MCF 10A (cell line): ENCODE measurements at regions of chr20 and their contacts with region 1.

Region 1: DNA sequence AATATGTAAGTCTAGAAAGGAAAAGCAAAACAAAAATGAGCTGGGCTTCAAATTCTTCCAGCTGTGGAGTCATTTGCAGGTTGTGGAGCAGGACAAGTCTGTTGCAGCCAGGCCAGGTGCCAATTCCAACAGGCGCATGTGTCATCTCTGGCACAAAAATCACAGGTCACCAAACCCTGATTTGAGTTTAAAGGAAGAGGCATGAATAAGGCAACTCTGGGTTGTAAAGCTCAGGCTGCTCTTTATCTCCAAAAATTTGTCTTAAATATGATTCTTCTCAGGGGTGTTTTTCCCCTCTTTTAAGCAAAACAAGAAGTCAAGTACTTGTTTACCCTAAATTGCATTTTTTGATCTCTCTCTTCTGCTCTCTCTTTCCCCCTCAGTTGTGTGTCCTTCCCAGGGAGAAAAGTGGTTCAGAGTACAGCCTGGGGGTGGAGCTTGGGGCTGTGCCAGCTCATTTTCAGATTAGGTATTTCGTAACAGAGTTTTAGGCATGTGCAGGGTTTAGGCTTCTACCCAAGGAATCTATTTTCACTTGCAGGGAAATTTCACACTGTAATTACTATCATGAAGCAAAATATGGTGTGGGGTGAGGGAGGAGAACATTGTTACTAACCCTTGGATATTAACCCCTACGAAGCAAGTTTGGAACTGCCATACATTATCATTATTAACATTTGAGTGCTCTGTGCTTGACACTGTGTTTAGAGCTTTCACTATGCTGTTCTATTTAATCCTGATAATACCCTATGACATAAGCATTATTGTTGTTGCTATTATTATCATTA is 8.3 kb upstream of the NCOA3 start:
- DNase-seq: peak; percentile 90
- H3K4me3 Mint-ChIP-seq: peak overlapping the region; percentile 44
- H3K27ac Mint-ChIP-seq: peak overlapping the region; percentile 21
- H3K4me1 Mint-ChIP-seq: peaks cover 13% of the 10 kb centered on the region
- H3K27me3 Mint-ChIP-seq: no peaks in the 10 kb centered on the region
- CTCF ChIP-seq: no peak

Region 2: GRCh38 chr20:47356526-47357295 is 136.7 kb before region 1 on chr20 and contains the start of gene ZMYND8:
- CTCF ChIA-PET with region 1: no interaction called
- POLR2A ChIA-PET with region 1: interaction called, 15 read pairs
- intact Hi-C with region 1: no loop called
- DNase-seq: peak; percentile 94
- H3K4me3 Mint-ChIP-seq: peak within 1 kb of the TSS; percentile 70
- H3K27ac Mint-ChIP-seq: no peak within 1 kb of the TSS
- H3K4me1 Mint-ChIP-seq: peaks cover 72% of the 10 kb centered on the region
- H3K27me3 Mint-ChIP-seq: no peaks in the 10 kb centered on the region
- CTCF ChIP-seq: no peak
- total RNA-seq, gene ZMYND8: 126 and 127 TPM in 2 replicates

Region 3: DNA sequence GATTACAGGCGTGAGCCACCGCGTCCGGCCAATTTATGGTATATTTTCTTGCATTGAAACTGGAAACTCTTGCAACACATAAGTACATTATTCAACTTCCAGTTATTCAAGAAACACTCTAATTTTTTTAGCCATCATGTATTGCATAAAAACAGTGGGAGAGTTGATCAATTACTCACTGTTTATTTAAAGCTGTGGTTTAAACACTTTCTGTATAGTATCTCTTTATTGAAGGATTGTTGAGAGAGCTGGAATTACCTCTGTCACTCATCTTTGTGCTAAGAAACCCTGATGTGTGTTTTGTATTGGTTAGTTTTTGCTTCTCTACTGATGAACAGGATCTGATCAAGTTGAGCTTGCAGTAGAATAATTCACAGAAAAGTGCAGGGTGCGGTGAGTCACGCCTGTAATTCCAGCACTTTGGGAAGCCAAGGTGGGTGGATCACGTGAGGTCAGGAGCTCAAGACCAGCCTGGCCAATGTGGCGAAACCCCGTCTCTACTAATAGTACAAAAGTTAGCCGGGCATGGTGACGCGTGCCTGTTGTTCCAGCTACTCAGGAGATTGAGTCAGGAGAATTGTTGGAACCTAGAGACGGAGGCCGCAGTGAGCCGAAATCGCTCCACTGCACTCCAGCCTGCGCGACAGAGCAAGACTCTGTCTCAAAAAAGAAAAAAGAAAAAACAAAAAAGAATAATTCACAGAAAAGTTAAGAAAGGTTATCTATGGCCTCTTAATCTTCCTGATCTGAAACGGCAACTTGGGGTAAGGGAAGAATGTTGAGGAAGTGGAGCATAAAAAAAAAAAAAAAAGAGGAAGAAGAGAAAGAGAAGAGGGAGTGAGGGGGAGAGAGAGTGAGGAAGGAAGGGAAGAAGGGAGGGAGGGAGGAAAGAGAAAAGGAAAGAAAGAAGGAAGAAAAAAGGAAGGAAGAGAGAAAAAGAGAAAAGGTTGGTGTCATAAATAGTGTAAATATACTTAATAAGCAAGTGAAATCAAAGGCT is 60.9 kb before region 1 on chr20:
- CTCF ChIA-PET with region 1: no interaction called
- POLR2A ChIA-PET with region 1: interaction called, 36 read pairs
- intact Hi-C with region 1: no loop called
- DNase-seq: peak; percentile 94
- H3K4me3 Mint-ChIP-seq: peak overlapping the region; percentile 66
- H3K27ac Mint-ChIP-seq: peak overlapping the region; percentile 99
- H3K4me1 Mint-ChIP-seq: peaks cover 27% of the 10 kb centered on the region
- H3K27me3 Mint-ChIP-seq: no peaks in the 10 kb centered on the region
- CTCF ChIP-seq: no peak

Region 4: GRCh38 chr20:47464380-47465101 is 28.8 kb before region 1 on chr20:
- CTCF ChIA-PET with region 1: interaction called, 9 read pairs
- POLR2A ChIA-PET with region 1: interaction called, 62 read pairs
- intact Hi-C with region 1: no loop called
- DNase-seq: peak; percentile 99
- H3K4me3 Mint-ChIP-seq: peak overlapping the region; percentile 51
- H3K27ac Mint-ChIP-seq: peak overlapping the region; percentile 72
- H3K4me1 Mint-ChIP-seq: peaks cover 38% of the 10 kb centered on the region
- H3K27me3 Mint-ChIP-seq: no peaks in the 10 kb centered on the region
- CTCF ChIP-seq: no peak

Region 5: GRCh38 chr20:47535088-47535487 is 41.7 kb after region 1 on chr20:
- CTCF ChIA-PET with region 1: no interaction called
- POLR2A ChIA-PET with region 1: no interaction called
- intact Hi-C with region 1: no loop called
- DNase-seq: no peak
- H3K4me3 Mint-ChIP-seq: no peak overlapping the region
- H3K27ac Mint-ChIP-seq: no peak overlapping the region
- H3K4me1 Mint-ChIP-seq: peaks cover 9% of the 10 kb centered on the region
- H3K27me3 Mint-ChIP-seq: no peaks in the 10 kb centered on the region
- CTCF ChIP-seq: no peak

Region 6: DNA sequence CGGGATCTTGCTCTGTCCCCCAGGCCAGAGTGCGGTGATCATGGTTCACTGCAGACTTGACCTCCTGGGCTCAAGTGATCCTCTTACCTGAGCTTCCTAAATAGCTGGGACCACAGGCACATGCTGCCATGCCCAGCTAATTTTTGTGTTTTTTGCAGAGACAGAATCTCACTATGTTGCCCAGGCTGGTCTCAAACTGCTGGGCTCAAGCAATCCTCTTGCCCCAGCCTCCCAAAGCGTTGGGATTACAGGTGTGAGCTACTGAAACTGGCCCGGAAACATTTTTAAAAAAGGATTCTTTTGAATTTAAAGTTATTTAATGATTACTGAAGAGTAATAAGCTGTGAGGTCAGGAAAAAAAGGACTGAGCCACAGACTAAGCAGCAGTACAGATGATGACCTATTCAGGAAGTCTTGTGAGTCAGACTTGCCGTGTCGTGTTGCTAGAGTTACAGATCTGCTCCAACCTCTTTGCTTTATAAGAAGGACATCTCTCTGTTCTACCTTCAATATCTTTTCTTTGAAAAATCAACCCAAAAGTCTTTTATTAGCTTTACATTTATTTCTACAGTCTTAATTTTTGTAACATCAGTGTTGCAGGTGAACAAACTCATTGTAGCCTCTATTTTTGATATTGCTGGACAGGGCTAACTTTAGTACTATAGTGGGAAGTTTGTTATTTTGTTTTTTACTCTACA is 117.0 kb after region 1 on chr20:
- CTCF ChIA-PET with region 1: interaction called, 3 read pairs
- POLR2A ChIA-PET with region 1: interaction called, 10 read pairs
- intact Hi-C with region 1: no loop called
- DNase-seq: peak; percentile 66
- H3K4me3 Mint-ChIP-seq: no peak overlapping the region
- H3K27ac Mint-ChIP-seq: peak overlapping the region; percentile 47
- H3K4me1 Mint-ChIP-seq: peaks cover 22% of the 10 kb centered on the region
- H3K27me3 Mint-ChIP-seq: no peaks in the 10 kb centered on the region
- CTCF ChIP-seq: no peak

Region 7: DNA sequence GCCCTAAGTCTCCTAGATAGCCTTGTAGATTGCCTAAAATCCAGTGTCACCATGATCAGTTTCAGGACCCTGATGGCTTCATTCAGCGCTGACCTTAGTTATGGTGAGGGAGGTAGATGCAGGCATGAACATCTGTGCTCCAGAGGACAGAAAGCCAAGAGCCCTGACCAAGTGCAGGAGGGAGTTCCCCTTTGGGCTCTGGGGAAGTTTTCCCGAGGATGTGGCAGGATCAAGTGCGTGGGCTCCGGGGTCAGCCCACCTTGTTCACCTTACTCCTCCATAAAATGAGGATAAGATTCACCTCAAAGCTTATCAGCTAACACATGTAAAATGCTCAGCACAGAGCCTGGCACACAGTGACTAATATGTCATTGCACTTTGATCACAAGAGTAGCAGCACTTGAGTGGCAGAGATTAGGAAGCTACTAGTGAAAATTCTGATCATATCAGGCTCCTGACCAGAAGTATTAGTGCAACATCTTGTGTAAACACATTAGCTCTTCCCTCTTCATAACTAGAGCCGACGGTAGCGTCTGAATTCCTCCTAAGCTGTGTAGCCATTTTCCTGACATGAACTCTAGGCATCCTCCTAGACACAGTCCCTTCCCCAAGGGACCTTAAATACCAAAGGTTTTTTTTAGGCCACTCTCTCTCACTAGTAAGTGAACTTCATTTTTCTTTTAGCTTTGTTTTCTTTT is 166.7 kb after region 1 on chr20:
- CTCF ChIA-PET with region 1: no interaction called
- POLR2A ChIA-PET with region 1: no interaction called
- intact Hi-C with region 1: no loop called
- DNase-seq: no peak
- H3K4me3 Mint-ChIP-seq: no peak overlapping the region
- H3K27ac Mint-ChIP-seq: no peak overlapping the region
- H3K4me1 Mint-ChIP-seq: peaks cover 13% of the 10 kb centered on the region
- H3K27me3 Mint-ChIP-seq: no peaks in the 10 kb centered on the region
- CTCF ChIP-seq: no peak